Heart right ventricle (tissue), 16 donors: ENCODE measurements at regions of chr21 and their contacts with region 1.

Region 1: DNA sequence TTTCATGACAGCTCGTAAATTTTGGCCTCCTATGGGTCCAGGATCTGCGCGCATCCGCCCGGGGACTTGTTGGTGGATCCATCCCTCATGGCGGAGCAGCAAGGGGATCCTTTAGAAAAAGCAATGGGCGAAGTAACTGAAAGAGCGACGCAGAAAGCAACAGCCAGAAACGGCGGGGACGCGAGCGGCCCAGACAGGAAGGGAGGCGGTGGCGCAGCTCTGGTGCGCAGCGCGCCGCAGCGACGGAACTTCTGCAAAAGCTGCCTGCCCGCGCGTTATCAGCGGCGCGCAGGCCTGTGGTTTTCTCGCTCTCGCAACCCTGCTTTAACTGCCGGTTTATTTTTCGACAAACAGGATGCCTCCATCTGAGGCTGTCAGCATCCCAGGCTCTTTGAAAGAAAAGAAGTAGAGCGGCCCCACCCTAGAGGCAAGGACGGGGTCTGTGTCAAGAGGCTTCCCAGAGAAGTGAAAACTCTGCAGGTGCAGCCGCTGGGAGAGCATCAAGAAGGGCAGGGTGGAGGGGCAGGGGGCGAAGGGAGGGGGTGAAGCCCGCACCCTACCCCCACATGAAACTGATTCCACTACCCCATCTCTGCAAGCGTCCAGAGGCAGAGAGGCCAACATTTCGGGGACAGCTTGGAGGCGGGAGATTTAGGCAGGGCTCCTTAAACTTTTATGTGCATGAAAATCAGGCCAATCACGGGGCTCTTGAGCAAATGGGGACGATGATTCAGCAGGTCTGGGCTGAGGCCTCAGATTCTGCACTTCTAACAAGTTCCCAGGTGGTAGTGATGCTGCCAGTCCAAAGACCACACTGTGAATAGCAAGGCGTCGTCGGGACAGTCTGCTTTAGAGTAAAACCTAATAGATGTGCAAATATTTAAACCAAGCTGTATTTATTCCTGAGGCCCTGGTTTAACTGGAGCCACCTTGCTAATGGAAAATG is 22.2 kb downstream of the RUNX1 start:
- DNase-seq: peak; percentile 42 to 66
- ATAC-seq: peak; percentile 70 to 89 (median 76)
- H3K4me3 ChIP-seq: peak overlapping the region in 6 of 10 donors; percentile 24 to 41 (median 32)
- H3K27ac ChIP-seq: peak overlapping the region in 6 of 10 donors; percentile 2 to 90 (median 32)
- H3K4me1 ChIP-seq: peaks cover 0 to 56% (median 0%) of the 10 kb centered on the region in 9 donors
- H3K27me3 ChIP-seq: peaks cover 0 to 32% (median 16%) of the 10 kb centered on the region in 7 donors
- CTCF ChIP-seq: no peak

Region 2: GRCh38 chr21:35011681-35012080 is 15.2 kb before region 1 on chr21:
- intact Hi-C with region 1: loop called in 1 of 10 experiments (anchors 2 kb)
- DNase-seq: no peak
- ATAC-seq: no peak
- H3K4me3 ChIP-seq: no peak overlapping the region
- H3K27ac ChIP-seq: no peak overlapping the region
- H3K4me1 ChIP-seq: peaks cover 0 to 11% (median 0%) of the 10 kb centered on the region in 9 donors
- H3K27me3 ChIP-seq: peaks cover 0 to 24% (median 6%) of the 10 kb centered on the region in 7 donors
- CTCF ChIP-seq: no peak